ENCODE measurements at regions of chr22 and their contacts with region 1.

Region 1: DNA sequence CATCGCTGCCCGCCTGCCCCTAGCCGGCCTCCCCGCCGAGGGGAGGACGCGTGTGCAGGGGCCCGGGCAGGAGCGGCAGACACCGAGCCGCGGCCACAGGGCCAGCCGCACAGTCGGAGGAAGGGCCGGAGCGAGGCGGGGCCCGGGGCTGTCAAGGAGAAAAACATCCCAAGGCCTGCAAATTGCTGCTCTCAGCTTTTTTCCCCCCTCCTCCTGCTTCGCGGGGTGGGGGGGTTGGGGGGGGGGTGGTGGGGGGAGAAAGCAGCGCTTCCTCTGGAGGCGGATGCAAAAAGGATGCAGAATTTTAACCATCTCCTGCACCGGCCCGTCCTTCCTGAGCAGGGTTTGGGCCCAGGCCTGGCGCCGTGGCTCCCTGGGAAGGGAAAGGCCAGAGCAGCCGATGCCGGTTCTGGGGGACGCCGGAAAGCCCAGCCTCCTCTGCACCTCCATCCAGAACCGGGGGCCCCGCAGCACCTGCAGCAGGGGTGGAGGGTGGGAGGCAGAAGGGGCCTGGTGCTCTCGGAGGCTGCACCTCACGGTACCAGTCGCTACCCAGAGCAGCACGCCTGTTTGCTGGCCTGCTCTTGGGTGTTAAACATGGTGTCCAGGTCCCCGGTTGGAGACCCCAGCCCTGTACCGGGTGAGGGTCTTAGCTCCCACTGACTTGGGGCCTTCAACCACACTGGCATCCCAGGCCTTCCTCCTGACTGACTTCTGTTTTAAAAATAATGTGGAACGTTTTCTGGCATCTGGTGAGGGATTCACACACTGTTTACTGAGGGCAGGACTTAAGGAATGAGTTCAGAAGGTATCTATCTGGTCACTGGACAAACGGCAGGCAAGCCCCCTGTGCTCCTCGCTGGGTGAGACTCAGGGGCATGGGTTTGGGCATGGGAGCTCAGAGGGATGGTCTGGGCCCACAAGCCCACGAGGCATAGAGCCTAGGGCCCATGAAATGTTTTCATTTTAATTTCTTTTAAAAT is 77.4 kb upstream of the WNT7B start:
- DNase-seq: peak; percentile 55
- H3K4me3 ChIP-seq: peak overlapping the region; percentile 29 to 49 (median 49)
- H3K27ac ChIP-seq: peak overlapping the region; percentile 56
- H3K4me1 ChIP-seq: peaks cover 52% of the 10 kb centered on the region
- H3K27me3 ChIP-seq: no peaks in the 10 kb centered on the region
- CTCF ChIP-seq: no peak
- POLR2A ChIP-seq: peak; percentile 13

Region 2: DNA sequence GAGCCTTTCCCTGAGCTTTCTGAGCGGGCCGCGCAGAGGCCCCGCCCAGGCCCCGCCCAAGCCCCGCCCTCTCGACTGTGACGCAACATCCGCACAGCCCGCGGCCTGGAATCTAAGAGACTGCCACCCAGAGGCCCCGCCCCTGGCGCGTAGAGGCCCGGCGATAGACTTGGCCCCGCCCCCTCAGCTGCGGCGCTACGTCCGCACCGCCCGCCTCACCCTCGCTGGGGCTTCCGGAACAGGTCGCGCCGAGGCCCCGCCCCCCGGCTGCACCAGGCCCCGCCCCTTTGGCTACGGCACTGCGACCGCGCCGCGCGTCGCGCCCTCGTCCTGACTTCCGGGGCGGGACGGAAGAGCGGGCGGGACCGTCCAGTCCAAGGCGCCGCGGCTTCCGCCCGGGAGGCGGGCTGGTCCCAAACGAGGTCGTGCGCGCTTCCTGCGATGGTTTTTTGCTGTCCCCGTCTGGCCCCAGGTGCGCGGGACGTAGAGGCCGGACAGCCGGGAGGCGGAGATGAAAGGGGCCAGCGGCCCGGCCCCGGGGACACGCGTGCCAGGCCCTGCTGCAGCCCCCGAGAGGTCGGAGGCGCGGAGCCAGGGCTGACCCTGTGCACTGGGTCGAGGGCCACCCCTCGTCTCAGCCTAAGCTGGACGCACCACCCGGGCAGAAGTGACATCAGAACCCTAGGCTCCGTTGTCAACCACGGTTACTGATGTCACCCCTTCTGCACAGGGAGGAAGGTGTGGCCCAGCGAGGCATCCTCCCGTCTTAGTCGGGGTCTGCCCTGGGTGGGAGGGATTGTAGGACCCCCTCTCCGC is 18.4 kb before region 1 on chr22:
- CTCF ChIA-PET with region 1: interaction called, 4 read pairs
- POLR2A ChIA-PET with region 1: interaction called, 3 read pairs
- dilution Hi-C with region 1: no loop called
- intact Hi-C with region 1: loop called (anchors 1 kb)
- DNase-seq: peak; percentile 100
- H3K4me3 ChIP-seq: peak overlapping the region; percentile 18 to 68 (median 26)
- H3K27ac ChIP-seq: peak overlapping the region; percentile 89
- H3K4me1 ChIP-seq: peaks cover 17% of the 10 kb centered on the region
- H3K27me3 ChIP-seq: no peaks in the 10 kb centered on the region
- CTCF ChIP-seq: no peak
- POLR2A ChIP-seq: peak; percentile 57